HCT116 (cell line): ENCODE measurements at regions of chr2 and their contacts with region 1.

Region 1: DNA sequence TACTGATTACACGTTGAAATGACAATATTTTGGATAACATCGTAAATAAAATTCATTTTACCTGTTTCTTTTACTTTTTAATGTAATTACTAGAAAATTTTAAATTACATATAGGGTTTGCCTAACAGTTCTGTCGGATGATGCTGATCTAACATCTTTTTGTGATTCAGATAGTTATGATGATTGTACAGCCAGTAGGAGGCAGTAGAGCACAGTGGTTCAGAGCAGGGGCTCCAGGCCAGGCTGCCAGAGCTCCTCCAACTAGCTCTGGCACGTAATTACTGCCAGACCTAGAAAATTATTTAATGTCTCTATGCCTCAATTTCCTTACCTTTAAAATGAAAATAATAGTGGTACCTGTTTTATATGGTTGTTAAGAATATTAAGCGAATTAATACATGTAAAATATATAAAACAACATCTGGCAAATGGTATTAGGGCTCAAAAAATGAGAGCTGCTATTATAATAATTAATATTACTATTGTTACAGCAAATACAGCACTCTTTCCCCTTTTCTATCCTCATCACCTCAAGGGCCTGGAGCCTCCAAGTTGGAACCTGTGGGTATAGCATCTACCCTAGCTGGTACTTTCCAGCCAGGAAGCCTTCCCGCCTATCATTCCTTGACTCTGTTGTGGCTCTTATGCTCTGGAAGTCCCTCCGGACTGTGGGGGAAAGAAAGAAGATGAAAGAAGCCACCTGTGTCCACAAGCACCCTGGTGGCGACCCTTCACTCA is 47.7 kb upstream of the PLA2R1 start:
- DNase-seq: peak; percentile 59
- ATAC-seq: peak; percentile 99
- H3K4me3 ChIP-seq: no peak overlapping the region
- H3K27ac ChIP-seq: no peak overlapping the region
- H3K4me1 ChIP-seq: no peaks in the 10 kb centered on the region
- H3K27me3 ChIP-seq: no peaks in the 10 kb centered on the region
- CTCF ChIP-seq: peak; percentile 71 to 87 (median 82); a peak in 5 of 6 replicates
- POLR2A ChIP-seq: no peak
- RAD21 ChIP-seq: peak; percentile 95

Region 2: GRCh38 chr2:159855557-159856061 is 254.5 kb before region 1 on chr2:
- CTCF ChIA-PET with region 1: no interaction called
- POLR2A ChIA-PET with region 1: no interaction called
- RAD21 ChIA-PET with region 1: no interaction called
- intact Hi-C with region 1: no loop called
- DNase-seq: no peak
- ATAC-seq: no peak
- H3K4me3 ChIP-seq: no peak overlapping the region
- H3K27ac ChIP-seq: no peak overlapping the region
- H3K4me1 ChIP-seq: no peaks in the 10 kb centered on the region
- H3K27me3 ChIP-seq: no peaks in the 10 kb centered on the region
- CTCF ChIP-seq: no peak
- POLR2A ChIP-seq: no peak
- RAD21 ChIP-seq: no peak

Region 3: GRCh38 chr2:160132761-160133160 is 22.7 kb after region 1 on chr2:
- CTCF ChIA-PET with region 1: no interaction called
- POLR2A ChIA-PET with region 1: no interaction called
- RAD21 ChIA-PET with region 1: no interaction called
- intact Hi-C with region 1: no loop called
- DNase-seq: no peak
- ATAC-seq: no peak
- H3K4me3 ChIP-seq: no peak overlapping the region
- H3K27ac ChIP-seq: no peak overlapping the region
- H3K4me1 ChIP-seq: no peaks in the 10 kb centered on the region
- H3K27me3 ChIP-seq: no peaks in the 10 kb centered on the region
- CTCF ChIP-seq: no peak
- POLR2A ChIP-seq: no peak
- RAD21 ChIP-seq: no peak

Region 4: GRCh38 chr2:160210599-160211138 is 100.6 kb after region 1 on chr2:
- CTCF ChIA-PET with region 1: interaction called, 30 read pairs
- POLR2A ChIA-PET with region 1: no interaction called
- RAD21 ChIA-PET with region 1: interaction called in 1 of 2 experiments, 5 read pairs
- intact Hi-C with region 1: loop called (anchors 1 kb)
- DNase-seq: peak; percentile 68
- ATAC-seq: peak; percentile 60
- H3K4me3 ChIP-seq: no peak overlapping the region
- H3K27ac ChIP-seq: no peak overlapping the region
- H3K4me1 ChIP-seq: peaks cover 46 to 68% of the 10 kb centered on the region in 2 experiments
- H3K27me3 ChIP-seq: no peaks in the 10 kb centered on the region
- CTCF ChIP-seq: peak; percentile 81 to 97 (median 94)
- POLR2A ChIP-seq: no peak
- RAD21 ChIP-seq: peak; percentile 84

Region 5: GRCh38 chr2:160252278-160252887 is 142.3 kb after region 1 on chr2:
- CTCF ChIA-PET with region 1: interaction called, 11 read pairs
- POLR2A ChIA-PET with region 1: no interaction called
- RAD21 ChIA-PET with region 1: interaction called in 1 of 2 experiments, 4 read pairs
- intact Hi-C with region 1: loop called (anchors 5 kb)
- DNase-seq: peak; percentile 34
- ATAC-seq: peak; percentile 47; the same call in 1 of the 2 replicates
- H3K4me3 ChIP-seq: no peak overlapping the region
- H3K27ac ChIP-seq: no peak overlapping the region
- H3K4me1 ChIP-seq: no peaks in the 10 kb centered on the region
- H3K27me3 ChIP-seq: no peaks in the 10 kb centered on the region
- CTCF ChIP-seq: peak; percentile 55 to 76 (median 70)
- POLR2A ChIP-seq: no peak
- RAD21 ChIP-seq: peak; percentile 61

Region 6: GRCh38 chr2:160298960-160299359 is 188.9 kb after region 1 on chr2:
- CTCF ChIA-PET with region 1: no interaction called
- POLR2A ChIA-PET with region 1: no interaction called
- RAD21 ChIA-PET with region 1: no interaction called
- intact Hi-C with region 1: no loop called
- DNase-seq: no peak
- ATAC-seq: no peak
- H3K4me3 ChIP-seq: no peak overlapping the region
- H3K27ac ChIP-seq: no peak overlapping the region
- H3K4me1 ChIP-seq: peaks cover 0 to 7% of the 10 kb centered on the region in 2 experiments; a peak in 2 of 4 replicates
- H3K27me3 ChIP-seq: no peaks in the 10 kb centered on the region
- CTCF ChIP-seq: no peak
- POLR2A ChIP-seq: no peak
- RAD21 ChIP-seq: no peak

Region 7: GRCh38 chr2:160429248-160430000 is 319.3 kb after region 1 on chr2:
- CTCF ChIA-PET with region 1: interaction called, 5 read pairs
- POLR2A ChIA-PET with region 1: no interaction called
- RAD21 ChIA-PET with region 1: no interaction called
- intact Hi-C with region 1: loop called (anchors 5 kb)
- DNase-seq: peak; percentile 56
- ATAC-seq: peak; percentile 61
- H3K4me3 ChIP-seq: no peak overlapping the region
- H3K27ac ChIP-seq: no peak overlapping the region
- H3K4me1 ChIP-seq: peaks cover 24 to 25% of the 10 kb centered on the region in 2 experiments
- H3K27me3 ChIP-seq: no peaks in the 10 kb centered on the region
- CTCF ChIP-seq: peak; percentile 37 to 70 (median 49); a peak in 5 of 6 replicates
- POLR2A ChIP-seq: no peak
- RAD21 ChIP-seq: peak; percentile 56

Region 8: DNA sequence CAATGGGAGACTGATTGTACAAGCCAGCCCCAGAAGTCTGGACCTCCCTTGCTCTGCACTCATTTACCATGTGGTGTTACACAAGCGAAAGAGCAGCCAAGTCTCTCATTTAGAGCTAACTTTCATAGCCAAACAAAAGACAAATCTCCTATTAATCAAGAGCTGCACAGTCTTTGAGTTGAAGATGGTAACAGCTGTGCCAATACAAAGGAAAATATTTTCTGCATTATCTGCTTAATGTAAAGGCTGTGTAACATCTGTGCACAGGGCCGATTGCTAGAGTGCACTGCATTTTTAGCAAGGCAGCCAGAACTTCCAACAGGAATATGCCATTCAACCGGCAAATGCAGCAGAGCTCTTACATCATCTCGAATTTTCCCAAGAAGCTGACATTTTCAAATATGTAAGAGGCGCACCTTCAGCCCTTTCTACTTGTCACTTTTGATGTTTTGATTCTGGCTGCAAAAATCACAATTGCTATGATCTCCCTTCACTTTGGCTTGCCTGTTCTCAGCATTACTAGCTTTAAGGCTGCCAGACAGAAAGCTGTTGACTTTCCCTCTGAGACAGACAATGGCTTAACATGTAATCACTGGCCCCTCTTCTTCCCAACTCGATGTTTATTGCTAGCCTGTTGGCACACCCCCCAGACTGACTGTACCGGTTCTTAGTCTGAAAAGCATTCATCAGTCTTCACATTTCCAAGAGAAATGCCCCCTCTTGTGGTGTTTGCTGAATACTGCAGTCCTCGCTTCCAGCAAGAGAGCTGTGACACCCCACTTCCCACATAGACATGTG is 953.3 kb after region 1 on chr2:
- CTCF ChIA-PET with region 1: interaction called, 13 read pairs
- POLR2A ChIA-PET with region 1: no interaction called
- RAD21 ChIA-PET with region 1: no interaction called
- intact Hi-C with region 1: loop called (anchors 2 kb)
- DNase-seq: peak; percentile 75
- ATAC-seq: peak; percentile 97
- H3K4me3 ChIP-seq: no peak overlapping the region
- H3K27ac ChIP-seq: no peak overlapping the region
- H3K4me1 ChIP-seq: peaks cover 0 to 9% of the 10 kb centered on the region in 2 experiments; a peak in 3 of 4 replicates
- H3K27me3 ChIP-seq: no peaks in the 10 kb centered on the region
- CTCF ChIP-seq: peak; percentile 60 to 93 (median 90); a peak in 5 of 6 replicates
- POLR2A ChIP-seq: no peak
- RAD21 ChIP-seq: peak; percentile 87